A673 (cell line): ENCODE measurements at regions of chr9 and their contacts with region 1.

Region 1: GRCh38 chr9:111759762-111760639 is 34.7 kb downstream of the SHOC1 start:
- DNase-seq: peak; percentile 85
- H3K4me3 ChIP-seq: no peak overlapping the region
- H3K27ac ChIP-seq: no peak overlapping the region
- H3K4me1 ChIP-seq: no peaks in the 10 kb centered on the region
- H3K27me3 ChIP-seq: no peaks in the 10 kb centered on the region
- CTCF ChIP-seq: peak; percentile 75

Region 2: GRCh38 chr9:111597817-111598729 is 161.9 kb before region 1 on chr9:
- CTCF ChIA-PET with region 1: no interaction called
- POLR2A ChIA-PET with region 1: no interaction called
- intact Hi-C with region 1: loop called (anchors 5 kb)
- DNase-seq: peak; percentile 78
- H3K4me3 ChIP-seq: peak overlapping the region; percentile 66
- H3K27ac ChIP-seq: no peak overlapping the region
- H3K4me1 ChIP-seq: no peaks in the 10 kb centered on the region
- H3K27me3 ChIP-seq: no peaks in the 10 kb centered on the region
- CTCF ChIP-seq: peak; percentile 92

Region 3: GRCh38 chr9:111896353-111896958 is 136.5 kb after region 1 on chr9 and contains the start of gene UGCG:
- CTCF ChIA-PET with region 1: no interaction called
- POLR2A ChIA-PET with region 1: no interaction called
- intact Hi-C with region 1: loop called (anchors 10 kb)
- DNase-seq: peak; percentile 92
- H3K4me3 ChIP-seq: peak within 1 kb of the TSS; percentile 96
- H3K27ac ChIP-seq: peak within 1 kb of the TSS; percentile 84
- H3K4me1 ChIP-seq: peaks cover 20% of the 10 kb centered on the region
- H3K27me3 ChIP-seq: no peaks in the 10 kb centered on the region
- CTCF ChIP-seq: no peak
- total RNA-seq, gene UGCG: 16.7 and 23.1 TPM in 2 replicates

Region 4: DNA sequence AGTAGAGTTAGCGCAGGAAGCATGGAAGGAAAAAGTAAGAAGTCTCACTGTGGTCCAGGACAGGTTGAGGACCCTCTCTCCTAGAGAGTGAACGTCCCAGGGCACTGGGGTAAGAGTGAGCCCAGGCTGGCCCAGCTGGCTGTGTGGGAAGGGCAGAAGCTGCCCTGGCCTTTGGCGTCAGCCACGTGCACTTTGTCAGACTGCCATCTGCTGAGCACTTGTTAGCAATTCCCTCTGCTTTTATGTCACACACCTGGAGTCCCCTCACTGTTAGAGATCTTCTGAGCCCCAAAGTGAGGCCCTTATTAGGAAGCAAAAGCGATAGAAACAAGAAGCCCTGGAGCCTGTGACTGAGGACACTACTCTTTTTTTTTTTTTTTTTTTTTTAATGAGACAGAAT is 215.7 kb after region 1 on chr9:
- CTCF ChIA-PET with region 1: no interaction called
- POLR2A ChIA-PET with region 1: no interaction called
- intact Hi-C with region 1: loop called (anchors 10 kb)
- DNase-seq: peak; percentile 22
- H3K4me3 ChIP-seq: no peak overlapping the region
- H3K27ac ChIP-seq: no peak overlapping the region
- H3K4me1 ChIP-seq: peaks cover 6% of the 10 kb centered on the region
- H3K27me3 ChIP-seq: no peaks in the 10 kb centered on the region
- CTCF ChIP-seq: peak; percentile 42; the same call in 1 of the 2 replicates

Region 5: GRCh38 chr9:112074250-112075008 is 314.4 kb after region 1 on chr9:
- CTCF ChIA-PET with region 1: interaction called, 23 read pairs
- POLR2A ChIA-PET with region 1: no interaction called
- intact Hi-C with region 1: loop called (anchors 1 kb)
- DNase-seq: peak; percentile 78
- H3K4me3 ChIP-seq: no peak overlapping the region
- H3K27ac ChIP-seq: no peak overlapping the region
- H3K4me1 ChIP-seq: no peaks in the 10 kb centered on the region
- H3K27me3 ChIP-seq: no peaks in the 10 kb centered on the region
- CTCF ChIP-seq: peak; percentile 96

Region 6: DNA sequence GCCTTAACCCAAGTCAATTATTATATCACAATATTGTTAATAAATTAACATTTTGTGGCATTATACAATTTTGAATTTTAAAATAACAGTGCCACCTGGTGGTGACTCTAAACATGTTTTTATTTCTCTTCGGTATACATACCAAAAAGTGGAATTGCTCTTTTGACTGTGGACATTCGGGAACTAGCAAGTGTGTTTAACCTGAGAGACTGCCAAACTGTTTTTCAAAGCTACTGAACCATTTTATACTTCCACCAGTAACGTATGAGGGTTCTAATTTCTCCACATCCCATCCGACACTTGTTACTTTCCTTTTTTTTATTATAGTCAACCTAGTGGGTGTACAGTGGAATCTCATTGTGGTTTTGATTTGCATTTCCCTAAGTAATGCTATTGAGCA is 601.6 kb after region 1 on chr9:
- CTCF ChIA-PET with region 1: no interaction called
- POLR2A ChIA-PET with region 1: no interaction called
- intact Hi-C with region 1: loop called (anchors 5 kb)
- DNase-seq: peak; percentile 70
- H3K4me3 ChIP-seq: no peak overlapping the region
- H3K27ac ChIP-seq: no peak overlapping the region
- H3K4me1 ChIP-seq: no peaks in the 10 kb centered on the region
- H3K27me3 ChIP-seq: no peaks in the 10 kb centered on the region
- CTCF ChIP-seq: peak; percentile 65